Endothelial cell of umbilical vein (primary cell): ENCODE measurements at regions of chr18 and their contacts with region 1.

Region 1: GRCh38 chr18:55509631-55510324 is 78.2 kb downstream of the TCF4 start:
- DNase-seq: peak; percentile 91
- H3K4me3 ChIP-seq: peak overlapping the region; percentile 13 to 55 (median 22)
- H3K27ac ChIP-seq: peak overlapping the region; percentile 96
- H3K4me1 ChIP-seq: peaks cover 60% of the 10 kb centered on the region
- H3K27me3 ChIP-seq: no peaks in the 10 kb centered on the region
- CTCF ChIP-seq: no peak
- POLR2A ChIP-seq: no peak

Region 2: DNA sequence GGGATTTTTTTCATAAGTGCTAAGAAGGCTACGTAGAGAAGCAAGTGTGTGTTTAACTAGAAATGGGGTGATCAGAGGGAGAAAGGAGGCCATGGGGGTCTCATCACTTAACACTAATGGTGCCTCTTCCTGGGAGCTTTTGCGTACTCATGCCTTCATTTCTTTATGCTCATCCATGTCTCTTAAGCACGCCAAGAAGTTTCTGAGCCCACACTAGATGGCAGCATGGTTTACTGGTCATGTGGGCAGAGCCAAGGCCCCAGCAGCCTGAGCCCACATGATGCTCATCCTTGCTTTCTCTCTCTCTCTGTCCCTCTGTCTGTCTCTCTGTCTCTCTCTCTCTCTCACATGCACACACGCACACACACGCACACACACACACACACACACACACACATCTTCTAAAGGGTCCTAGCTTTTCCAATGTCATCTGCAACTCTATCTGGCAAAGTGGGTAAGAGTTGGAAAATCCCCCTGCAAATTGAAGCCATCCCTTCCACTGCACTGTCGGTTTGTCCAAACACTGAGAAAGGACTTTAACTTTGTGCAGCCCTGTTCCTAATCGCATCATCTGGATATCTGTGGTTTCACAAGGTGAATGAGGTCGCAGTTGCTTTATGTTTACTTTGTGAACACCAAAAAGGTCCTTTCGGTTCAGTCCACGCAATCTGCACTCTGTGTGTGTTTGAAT is 413.4 kb before region 1 on chr18:
- CTCF ChIA-PET with region 1: interaction called, 3 read pairs
- POLR2A ChIA-PET with region 1: no interaction called
- dilution Hi-C with region 1: no loop called
- intact Hi-C with region 1: loop called (anchors 2 kb)
- DNase-seq: peak; percentile 64
- H3K4me3 ChIP-seq: no peak overlapping the region
- H3K27ac ChIP-seq: peak overlapping the region; percentile 80
- H3K4me1 ChIP-seq: peaks cover 39% of the 10 kb centered on the region
- H3K27me3 ChIP-seq: peaks cover 0 to 8% of the 10 kb centered on the region in 2 experiments
- CTCF ChIP-seq: peak; percentile 46 to 59
- POLR2A ChIP-seq: no peak

Region 3: GRCh38 chr18:55337908-55338521 is 171.8 kb before region 1 on chr18:
- CTCF ChIA-PET with region 1: no interaction called
- POLR2A ChIA-PET with region 1: no interaction called
- dilution Hi-C with region 1: no loop called
- intact Hi-C with region 1: loop called (anchors 1 kb)
- DNase-seq: peak; percentile 92
- H3K4me3 ChIP-seq: no peak overlapping the region
- H3K27ac ChIP-seq: peak overlapping the region; percentile 83
- H3K4me1 ChIP-seq: peaks cover 45% of the 10 kb centered on the region
- H3K27me3 ChIP-seq: no peaks in the 10 kb centered on the region
- CTCF ChIP-seq: no peak
- POLR2A ChIP-seq: no peak

Region 4: GRCh38 chr18:55477860-55478581 is 31.8 kb before region 1 on chr18:
- CTCF ChIA-PET with region 1: no interaction called
- POLR2A ChIA-PET with region 1: no interaction called
- dilution Hi-C with region 1: no loop called
- intact Hi-C with region 1: loop called (anchors 1 kb)
- DNase-seq: no peak
- H3K4me3 ChIP-seq: peak overlapping the region; percentile 31 to 91 (median 80)
- H3K27ac ChIP-seq: peak overlapping the region; percentile 95
- H3K4me1 ChIP-seq: peaks cover 35% of the 10 kb centered on the region
- H3K27me3 ChIP-seq: no peaks in the 10 kb centered on the region
- CTCF ChIP-seq: no peak
- POLR2A ChIP-seq: no peak

Region 5: GRCh38 chr18:55934821-55935220 is 425.0 kb after region 1 on chr18:
- CTCF ChIA-PET with region 1: no interaction called
- POLR2A ChIA-PET with region 1: no interaction called
- dilution Hi-C with region 1: no loop called
- intact Hi-C with region 1: no loop called
- DNase-seq: no peak
- H3K4me3 ChIP-seq: no peak overlapping the region
- H3K27ac ChIP-seq: no peak overlapping the region
- H3K4me1 ChIP-seq: no peaks in the 10 kb centered on the region
- H3K27me3 ChIP-seq: no peaks in the 10 kb centered on the region
- CTCF ChIP-seq: no peak
- POLR2A ChIP-seq: no peak

Region 6: DNA sequence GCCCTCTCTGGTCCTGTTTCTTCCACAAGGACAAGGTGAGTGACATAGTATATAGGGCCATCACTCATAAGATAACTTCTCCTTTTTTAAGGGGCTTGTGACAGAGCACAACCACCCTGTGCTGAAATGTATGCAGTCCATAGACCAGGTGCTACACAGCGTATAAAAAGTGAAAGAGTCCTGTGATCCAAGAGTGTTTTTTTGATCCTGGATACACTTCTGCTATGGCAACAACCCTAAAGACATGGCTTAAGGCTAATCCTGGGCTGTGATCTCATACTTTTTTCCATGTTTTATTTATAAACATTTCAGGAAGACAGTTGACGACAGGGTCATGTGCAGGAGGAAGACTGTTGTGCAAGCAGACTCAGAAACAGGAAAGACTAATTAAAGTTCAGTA is 478.8 kb after region 1 on chr18:
- CTCF ChIA-PET with region 1: no interaction called
- POLR2A ChIA-PET with region 1: no interaction called
- dilution Hi-C with region 1: no loop called
- intact Hi-C with region 1: loop called (anchors 1 kb)
- DNase-seq: peak; percentile 94
- H3K4me3 ChIP-seq: no peak overlapping the region
- H3K27ac ChIP-seq: peak overlapping the region; percentile 81
- H3K4me1 ChIP-seq: peaks cover 10% of the 10 kb centered on the region
- H3K27me3 ChIP-seq: no peaks in the 10 kb centered on the region
- CTCF ChIP-seq: no peak
- POLR2A ChIP-seq: no peak

Region 7: GRCh38 chr18:56291294-56291693 is 781.5 kb after region 1 on chr18:
- CTCF ChIA-PET with region 1: no interaction called
- POLR2A ChIA-PET with region 1: no interaction called
- dilution Hi-C with region 1: no loop called
- intact Hi-C with region 1: loop called (anchors 1 kb)
- DNase-seq: peak; percentile 83
- H3K4me3 ChIP-seq: no peak overlapping the region
- H3K27ac ChIP-seq: peak overlapping the region; percentile 46
- H3K4me1 ChIP-seq: peaks cover 24% of the 10 kb centered on the region
- H3K27me3 ChIP-seq: no peaks in the 10 kb centered on the region
- CTCF ChIP-seq: no peak
- POLR2A ChIP-seq: no peak